Calu3 (cell line): ENCODE measurements at regions of chr6 and their contacts with region 1.

Region 1: GRCh38 chr6:35833536-35833935 is 28.4 kb downstream of the LHFPL5 start:
- DNase-seq: no peak
- H3K4me3 Mint-ChIP-seq: no peak overlapping the region
- H3K27ac Mint-ChIP-seq: peak overlapping the region; percentile 23
- H3K4me1 Mint-ChIP-seq: peaks cover 15% of the 10 kb centered on the region
- H3K27me3 Mint-ChIP-seq: no peaks in the 10 kb centered on the region
- CTCF ChIP-seq: no peak

Region 2: GRCh38 chr6:35844290-35844689 is 10.8 kb after region 1 on chr6:
- CTCF ChIA-PET with region 1: interaction called, 10 read pairs
- intact Hi-C with region 1: no loop called
- DNase-seq: no peak
- H3K4me3 Mint-ChIP-seq: no peak overlapping the region
- H3K27ac Mint-ChIP-seq: no peak overlapping the region
- H3K4me1 Mint-ChIP-seq: no peaks in the 10 kb centered on the region
- H3K27me3 Mint-ChIP-seq: no peaks in the 10 kb centered on the region
- CTCF ChIP-seq: no peak

Region 3: DNA sequence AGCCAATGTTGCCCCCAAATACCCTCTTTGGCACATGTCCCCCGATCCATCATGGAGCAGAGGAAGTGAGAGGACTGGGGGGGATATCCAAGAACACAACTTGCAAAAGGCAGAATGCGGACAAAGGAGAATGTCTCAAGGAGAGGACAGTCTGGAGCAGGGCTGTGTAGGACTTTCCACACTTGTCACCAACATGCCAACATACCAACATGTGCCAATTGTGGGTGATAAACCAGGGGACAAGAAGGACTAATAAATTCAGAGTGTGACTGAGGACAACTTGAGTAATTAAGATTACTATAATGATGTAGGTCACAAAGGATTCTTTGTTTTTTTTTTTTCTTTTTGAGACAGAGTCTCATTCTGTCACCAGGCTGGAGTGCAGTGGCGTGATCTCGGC is 182.1 kb after region 1 on chr6:
- CTCF ChIA-PET with region 1: no interaction called
- intact Hi-C with region 1: no loop called
- DNase-seq: no peak
- H3K4me3 Mint-ChIP-seq: no peak overlapping the region
- H3K27ac Mint-ChIP-seq: no peak overlapping the region
- H3K4me1 Mint-ChIP-seq: no peaks in the 10 kb centered on the region
- H3K27me3 Mint-ChIP-seq: no peaks in the 10 kb centered on the region
- CTCF ChIP-seq: no peak

Region 4: DNA sequence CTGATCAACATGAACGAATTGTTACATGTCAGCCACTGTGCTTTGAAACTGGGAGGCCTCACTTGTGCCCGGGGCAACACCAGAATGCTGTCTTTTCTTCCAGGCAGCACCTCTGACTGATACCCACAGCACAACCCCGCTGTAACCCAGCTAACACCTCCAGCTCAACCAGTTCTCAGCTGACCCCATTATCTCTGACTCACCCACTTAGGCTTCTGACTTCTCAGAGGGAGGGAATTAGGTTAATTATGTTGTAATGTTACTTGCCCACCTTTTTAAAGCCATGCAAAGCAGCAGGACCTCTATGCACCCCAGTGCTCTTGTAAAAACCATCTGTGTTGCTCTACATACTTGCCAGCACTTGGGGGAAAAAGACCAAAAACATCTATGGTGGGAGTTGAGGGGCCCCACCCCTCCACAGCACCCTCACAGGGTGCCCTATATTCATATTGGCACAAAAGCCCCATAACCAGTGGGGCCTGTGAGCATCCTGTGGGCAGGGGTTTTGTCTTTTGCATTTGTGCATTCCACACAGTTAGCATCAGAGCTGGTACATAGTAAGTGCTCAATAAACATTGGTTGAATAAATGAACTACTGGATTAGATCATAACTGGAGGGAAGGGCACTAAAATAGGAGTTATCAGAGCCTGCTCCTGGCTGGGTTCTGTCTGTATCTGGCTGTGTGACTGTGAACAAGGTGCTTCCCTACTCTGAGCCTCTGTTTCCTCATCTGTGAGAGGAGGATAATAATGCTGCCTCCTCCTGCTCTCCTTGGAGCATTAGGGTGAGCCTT is 480.9 kb after region 1 on chr6:
- CTCF ChIA-PET with region 1: no interaction called
- intact Hi-C with region 1: no loop called
- DNase-seq: peak; percentile 78
- H3K4me3 Mint-ChIP-seq: peak overlapping the region; percentile 30
- H3K27ac Mint-ChIP-seq: peak overlapping the region; percentile 35
- H3K4me1 Mint-ChIP-seq: peaks cover 16% of the 10 kb centered on the region
- H3K27me3 Mint-ChIP-seq: no peaks in the 10 kb centered on the region
- CTCF ChIP-seq: no peak